Activated T-helper 2 cell treated with anti-CD3 and anti-CD28 coated beads, Interferon-gamma antibody, Interleukin-2, Interleukin-4, amounts not matched to agents 10 μg/mL and 5 μg/mL and 100 μg/mL, durations not matched to agents 14 hours and 24 hours and 36 hours (primary cell): ENCODE measurements at regions of chr11 and their contacts with region 1.

Region 1: GRCh38 chr11:118290923-118291322 is 13.6 kb upstream of the CD3E start:
- DNase-seq: peak; percentile 21
- H3K4me3 Mint-ChIP-seq: no peak overlapping the region
- H3K27ac Mint-ChIP-seq: no peak overlapping the region
- H3K4me1 Mint-ChIP-seq: peaks cover 22% of the 10 kb centered on the region
- H3K27me3 Mint-ChIP-seq: no peaks in the 10 kb centered on the region

Region 2: GRCh38 chr11:117900121-117900648 is 390.7 kb before region 1 on chr11:
- intact Hi-C with region 1: no loop called
- DNase-seq: no peak
- H3K4me3 Mint-ChIP-seq: no peak overlapping the region
- H3K27ac Mint-ChIP-seq: no peak overlapping the region
- H3K4me1 Mint-ChIP-seq: peaks cover 5% of the 10 kb centered on the region
- H3K27me3 Mint-ChIP-seq: peaks cover 5% of the 10 kb centered on the region

Region 3: GRCh38 chr11:118251858-118252652 is 38.9 kb before region 1 on chr11 and contains the start of gene MPZL3:
- intact Hi-C with region 1: loop called (anchors 2 kb)
- DNase-seq: peak; percentile 73
- H3K4me3 Mint-ChIP-seq: peak within 1 kb of the TSS; percentile 90
- H3K27ac Mint-ChIP-seq: peak within 1 kb of the TSS; percentile 97
- H3K4me1 Mint-ChIP-seq: peaks cover 38% of the 10 kb centered on the region
- H3K27me3 Mint-ChIP-seq: no peaks in the 10 kb centered on the region
- total RNA-seq, gene MPZL3: 49.5 and 49.7 TPM in 2 replicates

Region 4: DNA sequence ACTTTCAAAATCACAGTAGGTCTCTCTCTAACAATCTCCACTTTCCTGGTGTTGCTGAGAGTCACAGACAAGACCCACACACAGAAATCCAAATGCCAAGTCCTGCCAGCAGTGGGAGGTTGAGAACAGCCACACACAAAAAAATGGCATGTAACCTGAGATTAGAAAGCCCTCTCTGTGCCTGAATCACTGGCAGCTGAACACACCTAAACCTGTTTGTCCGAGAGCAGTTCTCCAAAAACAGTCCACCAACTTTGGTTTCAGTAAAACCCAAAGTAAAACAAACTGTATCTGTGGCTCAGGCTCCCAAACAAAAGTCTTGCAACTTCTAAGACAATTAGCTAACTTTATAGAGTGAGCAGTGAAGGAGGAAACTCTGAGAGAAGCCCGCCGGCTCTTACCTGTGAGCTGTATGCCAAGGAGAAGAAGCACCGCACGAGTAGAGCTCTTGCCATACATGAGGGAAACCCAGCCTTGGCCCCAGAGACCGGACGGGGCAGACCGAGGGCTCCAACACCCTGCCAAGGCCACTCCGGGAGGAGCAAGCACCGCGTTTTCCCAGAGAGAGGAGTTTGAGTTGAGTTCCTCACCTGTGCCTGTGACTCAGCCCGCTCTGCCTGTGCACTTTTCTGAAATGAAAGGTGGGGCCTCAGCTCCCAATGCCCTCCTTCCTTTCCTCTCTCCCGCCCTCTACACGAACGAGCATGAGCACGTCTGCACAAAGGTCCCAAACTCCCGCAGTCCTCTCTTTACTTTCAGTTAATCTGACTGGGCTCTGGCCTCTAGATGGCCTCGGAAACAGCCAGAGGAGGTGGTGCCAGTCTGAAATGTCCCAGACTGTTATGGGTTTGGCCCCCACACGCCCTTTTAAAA is 27.0 kb before region 1 on chr11 and contains the start of gene MPZL2:
- intact Hi-C with region 1: loop called (anchors 2 kb)
- DNase-seq: no peak
- H3K4me3 Mint-ChIP-seq: peak within 1 kb of the TSS; percentile 87
- H3K27ac Mint-ChIP-seq: peak within 1 kb of the TSS; percentile 71
- H3K4me1 Mint-ChIP-seq: peaks cover 50% of the 10 kb centered on the region
- H3K27me3 Mint-ChIP-seq: peaks cover 7% of the 10 kb centered on the region
- total RNA-seq, gene MPZL2: 13.9 and 14.6 TPM in 2 replicates

Region 5: GRCh38 chr11:118277306-118277705 is 13.6 kb before region 1 on chr11:
- intact Hi-C with region 1: no loop called
- DNase-seq: no peak
- H3K4me3 Mint-ChIP-seq: no peak overlapping the region
- H3K27ac Mint-ChIP-seq: peak overlapping the region; percentile 20
- H3K4me1 Mint-ChIP-seq: peaks cover 44% of the 10 kb centered on the region
- H3K27me3 Mint-ChIP-seq: peaks cover 2% of the 10 kb centered on the region